OCI-LY7 (cell line): ENCODE measurements at regions of chr1 and their contacts with region 1.

Region 1: DNA sequence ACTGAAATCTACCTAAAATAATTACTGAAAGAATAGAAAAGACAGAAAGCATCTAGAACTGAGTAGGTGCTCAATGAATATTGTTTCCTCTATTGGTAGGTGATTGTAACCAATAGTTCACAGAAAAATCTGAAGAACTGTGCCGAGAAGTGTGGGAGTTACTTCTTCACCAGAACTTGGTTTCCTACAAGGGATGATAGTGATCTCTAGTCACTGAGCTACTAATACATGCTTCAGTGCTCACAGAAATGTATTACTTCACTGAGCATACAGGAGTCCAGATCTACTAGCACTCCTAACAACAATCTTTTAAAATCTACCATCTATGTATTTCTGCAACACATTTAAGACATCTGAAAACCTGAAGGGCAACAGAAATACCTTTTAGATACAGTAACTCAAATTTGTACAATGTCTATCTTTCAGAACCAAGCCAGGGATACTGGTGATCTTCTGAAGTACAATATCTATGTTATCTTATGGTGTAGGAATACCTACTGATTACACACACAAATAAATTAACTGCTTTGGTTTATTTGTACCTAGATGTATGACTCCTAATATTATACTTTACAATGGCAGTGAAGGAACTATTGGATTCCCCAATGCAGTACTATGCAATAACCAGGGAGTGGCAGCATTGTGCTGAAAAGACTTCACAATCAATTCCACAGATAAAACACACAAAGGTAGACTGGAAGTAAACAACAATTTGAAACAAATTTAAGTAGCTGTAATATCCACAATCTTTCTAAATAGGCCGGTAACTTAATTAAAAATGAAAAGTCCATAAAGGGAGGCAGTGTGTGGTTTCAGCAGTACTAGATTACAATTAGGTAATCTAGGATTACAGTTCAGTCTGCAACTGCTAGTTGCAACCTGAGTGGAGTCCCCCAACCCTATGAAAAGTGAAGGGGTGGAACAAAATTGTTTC is 243.0 kb downstream of the SLC45A1 start:
- DNase-seq: peak; percentile 74
- H3K4me3 ChIP-seq: no peak overlapping the region
- H3K27ac ChIP-seq: peak overlapping the region; percentile 33
- H3K4me1 ChIP-seq: peaks cover 43% of the 10 kb centered on the region
- CTCF ChIP-seq: peak; percentile 100

Region 2: DNA sequence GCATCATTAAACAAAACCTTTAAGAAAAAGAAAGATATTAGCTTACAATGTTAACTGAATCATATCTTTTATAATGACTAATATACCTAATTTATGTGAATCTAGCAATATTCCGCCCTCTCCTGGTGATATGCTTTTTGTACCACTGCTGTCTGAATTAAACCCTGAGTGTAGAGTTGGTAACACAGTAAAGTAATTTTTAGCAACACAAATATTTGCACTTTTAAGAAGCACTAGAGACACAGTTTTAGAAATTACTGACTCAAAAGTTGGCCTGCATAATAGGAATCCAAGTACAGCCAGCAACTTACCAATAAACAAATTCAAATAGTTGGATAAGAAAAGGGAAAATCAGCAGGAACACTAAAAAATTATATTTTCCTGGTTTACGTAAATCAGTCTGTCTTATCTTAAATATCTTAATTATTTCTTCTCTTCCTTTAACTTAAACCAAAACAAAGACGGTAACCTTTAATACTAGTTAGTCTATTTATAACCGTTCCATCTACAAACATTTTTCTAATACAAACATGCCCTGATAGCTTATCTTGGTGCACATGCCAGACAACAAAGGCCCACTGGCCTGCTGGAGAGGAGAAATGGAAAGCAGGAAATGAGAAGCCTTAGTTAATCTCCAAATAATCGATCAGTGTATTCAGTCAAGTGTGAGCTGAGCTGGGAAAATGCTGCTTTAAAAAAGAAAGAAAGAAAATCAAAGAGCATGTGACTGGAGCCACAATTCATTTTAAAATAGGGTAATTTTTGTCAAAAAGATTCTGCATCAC is 10.5 kb after region 1 on chr1:
- CTCF ChIA-PET with region 1: interaction called, 6 read pairs
- POLR2A ChIA-PET with region 1: interaction called, 11 read pairs
- intact Hi-C with region 1: no loop called
- DNase-seq: peak; percentile 64
- H3K4me3 ChIP-seq: no peak overlapping the region
- H3K27ac ChIP-seq: peak overlapping the region; percentile 14
- H3K4me1 ChIP-seq: peaks cover 24% of the 10 kb centered on the region
- CTCF ChIP-seq: peak; percentile 97

Region 3: DNA sequence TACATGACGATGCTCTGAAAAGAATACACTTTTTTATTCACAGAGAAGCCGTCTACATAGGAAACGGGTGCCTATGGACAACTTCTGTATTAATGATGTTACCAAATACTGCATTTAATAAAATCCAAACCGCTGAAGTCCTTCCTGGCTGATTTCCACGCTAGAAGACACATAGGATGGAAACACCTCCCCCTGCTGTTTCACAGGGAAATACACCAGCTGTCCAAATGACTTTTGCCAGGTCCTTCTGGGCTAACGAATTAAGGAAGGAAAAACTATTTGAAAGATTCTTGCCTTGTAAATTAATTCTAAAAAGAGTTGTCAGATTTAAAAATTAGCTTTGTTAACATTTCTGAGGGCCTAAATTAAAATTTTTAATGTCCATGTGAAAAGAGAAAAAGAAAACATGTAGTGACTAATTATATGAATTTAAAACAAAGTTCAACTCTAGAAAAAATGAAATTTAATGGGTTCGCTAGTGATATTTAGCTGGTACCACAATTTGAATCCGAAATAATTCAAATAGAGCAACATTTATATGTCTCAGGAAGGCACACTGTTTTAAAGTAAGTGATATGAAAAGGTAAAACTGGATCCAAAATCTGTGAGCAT is 110.5 kb after region 1 on chr1:
- CTCF ChIA-PET with region 1: interaction called, 4 read pairs
- POLR2A ChIA-PET with region 1: no interaction called
- intact Hi-C with region 1: loop called (anchors 5 kb)
- DNase-seq: peak; percentile 46
- H3K4me3 ChIP-seq: no peak overlapping the region
- H3K27ac ChIP-seq: no peak overlapping the region
- H3K4me1 ChIP-seq: peaks cover 24% of the 10 kb centered on the region
- CTCF ChIP-seq: peak; percentile 83

Region 4: DNA sequence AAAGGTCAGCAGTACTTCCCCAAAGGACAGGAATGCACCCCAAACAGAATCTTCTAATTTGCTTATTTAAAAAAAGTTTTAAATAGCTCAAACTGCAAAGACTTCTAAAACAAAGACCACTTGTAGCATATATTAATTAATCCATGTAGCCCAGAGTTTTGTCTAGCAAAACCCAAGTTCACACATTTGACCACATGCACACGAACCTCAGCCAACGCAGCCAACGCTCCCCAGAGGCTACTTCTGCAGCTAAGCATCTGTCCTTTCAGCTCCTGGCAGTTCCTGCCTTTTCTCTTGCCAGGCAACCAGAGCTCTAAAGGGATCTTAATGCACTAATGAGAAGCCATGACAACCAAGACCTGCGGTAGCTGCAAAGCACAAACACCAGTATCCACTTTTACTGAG is 166.9 kb after region 1 on chr1:
- CTCF ChIA-PET with region 1: no interaction called
- POLR2A ChIA-PET with region 1: interaction called, 4 read pairs
- intact Hi-C with region 1: loop called (anchors 1 kb)
- DNase-seq: no peak
- H3K4me3 ChIP-seq: no peak overlapping the region
- H3K27ac ChIP-seq: no peak overlapping the region
- H3K4me1 ChIP-seq: peaks cover 29% of the 10 kb centered on the region
- CTCF ChIP-seq: no peak

Region 5: GRCh38 chr1:8848663-8849386 is 287.9 kb after region 1 on chr1:
- CTCF ChIA-PET with region 1: no interaction called
- POLR2A ChIA-PET with region 1: no interaction called
- intact Hi-C with region 1: loop called (anchors 1 kb)
- DNase-seq: peak; percentile 82
- H3K4me3 ChIP-seq: no peak overlapping the region
- H3K27ac ChIP-seq: no peak overlapping the region
- H3K4me1 ChIP-seq: peaks cover 9% of the 10 kb centered on the region
- CTCF ChIP-seq: peak; percentile 88